WTC11 (cell line): ENCODE measurements at regions of chr1 and their contacts with region 1.

Region 1: GRCh38 chr1:6108937-6109614 is 63.4 kb downstream of the KCNAB2 start:
- DNase-seq: peak; percentile 62
- ATAC-seq: peak; percentile 73
- H3K4me3 Mint-ChIP-seq: no peak overlapping the region
- H3K27ac Mint-ChIP-seq: no peak overlapping the region
- H3K4me1 Mint-ChIP-seq: no peaks in the 10 kb centered on the region
- H3K27me3 Mint-ChIP-seq: no peaks in the 10 kb centered on the region
- CTCF ChIP-seq: peak; percentile 31; the same call in 1 of the 2 replicates

Region 2: GRCh38 chr1:6127587-6128163 is 18.6 kb after region 1 on chr1:
- CTCF ChIA-PET with region 1: interaction called, 14 read pairs
- POLR2A ChIA-PET with region 1: no interaction called
- DNase-seq: peak; percentile 93
- ATAC-seq: peak; percentile 92
- H3K4me3 Mint-ChIP-seq: peak overlapping the region; percentile 44; the same call in 1 of the 2 replicates
- H3K27ac Mint-ChIP-seq: no peak overlapping the region
- H3K4me1 Mint-ChIP-seq: 0 out of 2 replicates have a peak, but pooled peaks cover 3% of the 10 kb centered on the region
- H3K27me3 Mint-ChIP-seq: peaks cover 25% of the 10 kb centered on the region
- CTCF ChIP-seq: no peak

Region 3: GRCh38 chr1:6137758-6138157 is 28.7 kb after region 1 on chr1:
- CTCF ChIA-PET with region 1: interaction called, 10 read pairs
- POLR2A ChIA-PET with region 1: no interaction called
- DNase-seq: peak; percentile 26
- ATAC-seq: peak; percentile 37; the same call in 1 of the 2 replicates
- H3K4me3 Mint-ChIP-seq: no peak overlapping the region
- H3K27ac Mint-ChIP-seq: no peak overlapping the region
- H3K4me1 Mint-ChIP-seq: no peaks in the 10 kb centered on the region
- H3K27me3 Mint-ChIP-seq: no peaks in the 10 kb centered on the region
- CTCF ChIP-seq: no peak

Region 4: GRCh38 chr1:6199298-6200187 is 90.5 kb after region 1 on chr1 and contains the start of gene RPL22:
- CTCF ChIA-PET with region 1: interaction called, 10 read pairs
- POLR2A ChIA-PET with region 1: no interaction called
- DNase-seq: peak; percentile 99
- ATAC-seq: peak; percentile 93
- H3K4me3 Mint-ChIP-seq: peak within 1 kb of the TSS; percentile 97
- H3K27ac Mint-ChIP-seq: peak within 1 kb of the TSS; percentile 96
- H3K4me1 Mint-ChIP-seq: peaks cover 37% of the 10 kb centered on the region
- H3K27me3 Mint-ChIP-seq: no peaks in the 10 kb centered on the region
- CTCF ChIP-seq: no peak
- total RNA-seq, gene RPL22: 441 to 512 TPM (median 491 TPM) in 3 replicates